ENCODE measurements at regions of chr1 and their contacts with region 1.

Region 1: DNA sequence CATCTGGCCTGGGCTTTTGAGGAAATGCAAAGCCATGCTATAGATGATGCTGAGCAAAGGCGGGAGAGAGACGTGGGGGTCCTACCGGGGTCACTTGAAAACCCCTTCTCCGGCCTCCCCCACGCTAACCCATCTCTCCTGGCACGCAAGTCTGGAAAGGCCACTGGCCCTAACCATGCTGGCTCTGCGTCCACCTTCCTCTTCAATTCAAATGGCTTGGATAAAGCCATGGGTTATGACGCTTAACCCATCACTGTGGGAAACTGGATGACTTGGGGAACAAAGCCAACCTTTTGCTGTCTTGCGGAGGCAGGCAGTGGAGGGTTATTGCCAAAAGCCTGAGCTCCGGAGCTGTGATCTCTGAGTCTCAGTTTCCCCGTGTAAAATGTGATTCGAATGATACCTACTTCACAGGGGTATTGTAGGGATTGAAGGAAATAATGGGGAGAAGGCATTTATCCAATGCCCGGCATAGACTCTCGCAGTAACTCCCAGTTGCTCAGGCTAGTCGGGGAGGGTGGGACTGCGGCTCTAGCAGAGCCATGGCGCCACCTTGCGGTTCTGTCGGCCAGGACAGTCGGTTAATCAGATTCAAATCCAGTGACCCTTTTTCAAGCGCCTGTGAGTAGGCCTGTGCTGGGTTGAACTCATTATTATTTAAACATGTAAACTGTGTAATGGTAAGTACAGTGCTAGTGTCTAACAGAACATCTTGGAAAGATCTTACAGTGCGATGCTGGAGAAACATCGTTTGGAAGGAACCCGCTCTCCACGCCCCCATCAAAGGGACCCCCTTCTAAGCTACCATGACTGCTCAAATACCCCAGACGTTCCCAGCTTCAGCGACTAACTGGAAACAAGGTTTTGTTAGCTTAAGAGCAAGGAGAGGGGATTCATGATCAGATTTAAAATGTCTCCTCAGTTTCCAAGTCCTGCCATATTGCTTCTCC is 20.3 kb downstream of the NEK2 start:
- DNase-seq: peak; percentile 66 to 85
- ATAC-seq: peak; percentile 90 to 97
- H3K4me3 ChIP-seq: no peak overlapping the region
- H3K27ac ChIP-seq: peak overlapping the region; percentile 39 to 64; a peak in 4 of 6 replicates
- H3K4me1 ChIP-seq: peaks cover 25% of the 10 kb centered on the region
- CTCF ChIP-seq: peak; percentile 97
- EP300 ChIP-seq: no peak
- POLR2A ChIP-seq: no peak
- RAD21 ChIP-seq: peak; percentile 99

Region 2: GRCh38 chr1:211323156-211324063 is 331.7 kb before region 1 on chr1:
- CTCF ChIA-PET with region 1: interaction called, 32 read pairs
- POLR2A ChIA-PET with region 1: no interaction called
- DNase-seq: peak; percentile 66 to 72
- ATAC-seq: peak; percentile 80 to 87
- H3K4me3 ChIP-seq: no peak overlapping the region
- H3K27ac ChIP-seq: no peak overlapping the region
- H3K4me1 ChIP-seq: peaks cover 11% of the 10 kb centered on the region
- CTCF ChIP-seq: peak; percentile 92
- EP300 ChIP-seq: no peak
- POLR2A ChIP-seq: no peak
- RAD21 ChIP-seq: peak; percentile 82 to 90

Region 3: DNA sequence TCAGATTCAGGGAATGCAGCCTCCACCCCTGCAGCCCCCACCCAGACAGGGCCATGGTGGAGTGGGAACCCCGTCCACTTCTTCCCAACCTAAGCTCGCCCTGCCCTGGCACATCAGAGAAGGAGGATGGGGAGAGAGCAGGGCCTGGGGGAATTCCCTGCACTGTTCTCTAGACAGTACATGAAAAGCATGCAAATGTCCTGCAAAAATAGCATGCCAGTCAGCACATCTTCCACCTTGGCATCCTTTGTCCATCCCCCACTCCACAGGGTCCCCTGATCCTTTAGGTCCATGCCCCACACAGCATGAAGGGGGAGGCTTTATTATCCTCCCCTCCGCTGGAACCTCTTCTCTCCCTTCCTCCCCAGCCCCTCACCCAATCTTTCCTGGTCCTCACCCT is 128.1 kb before region 1 on chr1:
- CTCF ChIA-PET with region 1: interaction called, 16 read pairs
- POLR2A ChIA-PET with region 1: no interaction called
- DNase-seq: no peak
- ATAC-seq: no peak
- H3K4me3 ChIP-seq: no peak overlapping the region
- H3K27ac ChIP-seq: no peak overlapping the region
- H3K4me1 ChIP-seq: peaks cover 9% of the 10 kb centered on the region; the same call in 2 of the 3 replicates
- CTCF ChIP-seq: no peak
- EP300 ChIP-seq: no peak
- POLR2A ChIP-seq: no peak
- RAD21 ChIP-seq: no peak

Region 4: GRCh38 chr1:211566431-211567025 is 88.6 kb before region 1 on chr1:
- CTCF ChIA-PET with region 1: interaction called, 12 read pairs
- POLR2A ChIA-PET with region 1: no interaction called
- DNase-seq: no peak
- ATAC-seq: no peak
- H3K4me3 ChIP-seq: no peak overlapping the region
- H3K27ac ChIP-seq: no peak overlapping the region
- H3K4me1 ChIP-seq: no peaks in the 10 kb centered on the region
- CTCF ChIP-seq: no peak
- EP300 ChIP-seq: no peak
- POLR2A ChIP-seq: no peak
- RAD21 ChIP-seq: no peak

Region 5: GRCh38 chr1:211578640-211579433 is 76.3 kb before region 1 on chr1 and contains the start of gene SLC30A1:
- CTCF ChIA-PET with region 1: interaction called, 32 read pairs
- POLR2A ChIA-PET with region 1: interaction called, 18 read pairs
- DNase-seq: peak; percentile 99
- ATAC-seq: peak; percentile 77 to 92
- H3K4me3 ChIP-seq: peak within 1 kb of the TSS; percentile 91
- H3K27ac ChIP-seq: peak within 1 kb of the TSS; percentile 95 to 96
- H3K4me1 ChIP-seq: peaks cover 33% of the 10 kb centered on the region
- CTCF ChIP-seq: no peak
- EP300 ChIP-seq: no peak
- POLR2A ChIP-seq: peak; percentile 88
- RAD21 ChIP-seq: no peak
- polyA plus RNA-seq, gene SLC30A1: 18.4 and 20.6 TPM in 2 replicates

Region 6: DNA sequence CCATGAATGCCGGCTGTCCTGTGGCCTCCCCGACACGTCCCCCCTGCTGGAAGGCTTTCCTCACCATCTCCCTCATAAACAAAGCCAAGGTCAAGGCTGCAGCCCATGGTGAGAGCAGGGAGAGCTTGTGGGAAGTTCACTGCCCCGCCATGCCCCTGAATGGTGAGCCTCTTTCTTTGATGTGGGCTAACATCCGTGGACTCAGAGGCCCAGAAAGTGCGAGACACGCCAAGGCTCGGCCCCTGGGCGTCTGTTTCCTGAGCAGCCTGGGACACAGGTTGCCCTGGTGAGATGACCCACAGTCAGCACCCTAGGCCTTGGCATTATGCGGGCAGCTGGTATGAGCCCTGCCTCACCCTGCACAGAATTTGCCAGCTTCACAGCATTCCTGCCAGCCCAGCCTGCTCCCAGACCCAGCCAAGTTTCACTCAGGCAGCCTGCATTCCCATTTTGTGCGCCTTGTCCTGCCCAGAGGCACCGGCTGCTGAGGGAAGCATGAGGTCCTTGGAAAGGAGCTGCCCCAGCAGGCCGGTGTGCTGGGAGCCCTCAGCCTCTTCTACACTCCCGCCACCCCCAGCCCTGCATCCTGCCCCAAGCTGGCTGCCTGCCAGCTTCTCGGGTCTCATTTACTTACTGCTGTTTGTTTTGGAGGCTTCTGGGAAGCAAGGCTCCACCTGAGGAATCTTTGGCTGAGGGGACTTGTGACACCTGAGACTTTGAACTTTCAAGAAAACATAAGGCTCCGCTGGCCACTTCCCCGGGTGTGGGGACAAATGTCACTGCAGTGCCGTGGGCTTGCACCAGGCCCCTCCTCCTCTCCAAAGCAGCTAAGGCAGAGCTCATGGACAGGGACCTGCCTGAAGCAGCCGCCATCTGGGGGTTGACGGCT is 11.5 kb before region 1 on chr1:
- CTCF ChIA-PET with region 1: interaction called, 33 read pairs
- POLR2A ChIA-PET with region 1: no interaction called
- DNase-seq: peak in 1 of 2 experiments; percentile 39
- ATAC-seq: peak; percentile 58 to 70; a peak in 5 of 6 replicates
- H3K4me3 ChIP-seq: 0 out of 3 replicates have a peak overlapping the region, but pooled peaks have one; percentile 2
- H3K27ac ChIP-seq: peak overlapping the region; percentile 60 to 83
- H3K4me1 ChIP-seq: peaks cover 70% of the 10 kb centered on the region
- CTCF ChIP-seq: no peak
- EP300 ChIP-seq: no peak
- POLR2A ChIP-seq: no peak
- RAD21 ChIP-seq: no peak

Region 7: DNA sequence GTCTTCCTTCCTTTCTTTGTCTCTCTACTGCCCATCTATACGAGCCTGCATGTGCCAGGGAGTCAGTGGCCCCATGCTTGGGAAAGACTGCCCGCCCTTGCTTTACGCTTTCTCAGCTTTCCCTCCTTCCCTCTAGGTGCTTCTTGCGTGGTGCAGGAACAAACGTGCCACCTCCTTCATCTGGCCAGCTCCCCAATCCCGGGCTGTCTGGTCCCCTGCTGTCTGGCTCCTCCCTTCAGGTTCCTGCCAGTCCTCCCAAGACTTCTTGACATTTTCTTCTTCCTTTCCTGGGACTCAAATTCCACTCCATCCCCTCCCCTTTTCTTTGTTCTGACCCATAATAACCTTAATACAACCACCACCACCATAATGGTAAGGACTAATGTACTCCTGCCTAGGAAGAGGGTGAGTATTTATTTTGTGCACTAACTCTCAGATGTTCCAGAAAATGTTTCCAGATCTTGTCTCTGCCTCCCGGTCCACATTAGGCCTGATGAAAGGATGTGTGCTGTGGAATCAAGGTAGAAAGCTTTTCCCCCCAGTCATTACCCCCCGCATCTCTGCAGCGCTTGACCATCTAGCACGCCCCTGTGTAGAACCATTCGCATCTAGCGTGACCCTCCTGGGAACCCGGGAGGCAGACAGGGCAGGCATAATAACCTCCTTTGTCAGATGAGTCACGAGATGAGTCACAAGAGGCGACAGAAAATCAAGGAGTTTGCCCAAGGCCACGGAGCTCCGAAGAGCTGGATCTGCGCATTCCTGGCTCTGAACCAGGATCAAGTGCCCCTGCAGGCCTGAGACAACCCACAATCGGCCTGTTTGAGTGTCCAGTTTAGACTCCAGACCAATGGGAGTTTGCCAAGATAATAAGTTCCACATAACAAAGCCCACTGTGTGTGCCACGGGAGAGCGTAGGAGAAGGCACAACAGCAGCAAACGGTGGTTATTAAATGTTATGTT is 80.4 kb after region 1 on chr1:
- CTCF ChIA-PET with region 1: no interaction called
- POLR2A ChIA-PET with region 1: no interaction called
- DNase-seq: peak; percentile 95
- ATAC-seq: peak; percentile 89
- H3K4me3 ChIP-seq: peak overlapping the region; percentile 23; the same call in 1 of the 3 replicates
- H3K27ac ChIP-seq: peak overlapping the region; percentile 90 to 92
- H3K4me1 ChIP-seq: peaks cover 58% of the 10 kb centered on the region
- CTCF ChIP-seq: no peak
- EP300 ChIP-seq: peak; percentile 35 to 66; a peak in 3 of 5 replicates
- POLR2A ChIP-seq: no peak
- RAD21 ChIP-seq: peak; percentile 12 to 41; a peak in 3 of 5 replicates